ENCODE measurements at regions of chr2 and their contacts with region 1.

Region 1: DNA sequence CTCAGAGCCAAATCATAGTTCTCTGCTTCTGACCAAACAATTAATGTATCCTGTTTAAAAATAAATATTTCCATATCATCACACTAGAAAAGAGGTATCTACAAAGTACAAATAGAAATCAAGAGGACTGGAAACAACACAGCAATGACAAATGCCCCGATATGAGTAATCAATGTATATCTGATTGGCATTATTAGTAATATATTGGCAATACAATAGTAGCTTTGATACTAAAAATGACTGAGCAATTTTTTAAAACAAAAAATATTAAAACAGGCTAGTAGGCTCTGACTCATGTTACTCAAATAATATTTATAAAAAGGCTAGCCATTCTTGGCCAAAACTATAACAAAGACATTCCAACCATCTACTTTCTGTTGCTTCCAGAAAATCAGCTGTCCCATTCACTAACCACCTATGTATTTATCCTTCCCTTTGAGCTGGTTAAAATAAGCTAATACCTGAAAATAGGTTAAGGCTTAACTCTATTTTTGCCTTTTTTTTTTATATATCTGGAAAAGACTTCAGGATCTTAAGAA is 13.3 kb downstream of the PPP4R3B start:
- DNase-seq: no peak
- ATAC-seq: no peak
- H3K4me3 ChIP-seq: no peak overlapping the region
- H3K4me3 Mint-ChIP-seq: no peak overlapping the region
- H3K27ac ChIP-seq: no peak overlapping the region
- H3K27ac Mint-ChIP-seq: peak overlapping the region; percentile 48 to 55
- H3K4me1 ChIP-seq: peaks cover 3 to 20% of the 10 kb centered on the region in 2 experiments
- H3K4me1 Mint-ChIP-seq: peaks cover 70 to 76% (median 75%) of the 10 kb centered on the region in 3 donors
- H3K27me3 ChIP-seq: no peaks in the 10 kb centered on the region
- H3K27me3 Mint-ChIP-seq: no peaks in the 10 kb centered on the region

Region 2: GRCh38 chr2:55239656-55240222 is 364.4 kb before region 1 on chr2:
- CTCF ChIA-PET with region 1: no interaction called
- POLR2A ChIA-PET with region 1: no interaction called
- DNase-seq: no peak
- ATAC-seq: peak in 1 of 4 experiments; percentile 20
- H3K4me3 ChIP-seq: no peak overlapping the region
- H3K4me3 Mint-ChIP-seq: no peak overlapping the region
- H3K27ac ChIP-seq: no peak overlapping the region
- H3K27ac Mint-ChIP-seq: no peak overlapping the region
- H3K4me1 ChIP-seq: peaks cover 0 to under 1% of the 10 kb centered on the region in 2 experiments
- H3K4me1 Mint-ChIP-seq: peaks cover 6 to 23% (median 18%) of the 10 kb centered on the region in 3 donors
- H3K27me3 ChIP-seq: no peaks in the 10 kb centered on the region
- H3K27me3 Mint-ChIP-seq: no peaks in the 10 kb centered on the region

Region 3: DNA sequence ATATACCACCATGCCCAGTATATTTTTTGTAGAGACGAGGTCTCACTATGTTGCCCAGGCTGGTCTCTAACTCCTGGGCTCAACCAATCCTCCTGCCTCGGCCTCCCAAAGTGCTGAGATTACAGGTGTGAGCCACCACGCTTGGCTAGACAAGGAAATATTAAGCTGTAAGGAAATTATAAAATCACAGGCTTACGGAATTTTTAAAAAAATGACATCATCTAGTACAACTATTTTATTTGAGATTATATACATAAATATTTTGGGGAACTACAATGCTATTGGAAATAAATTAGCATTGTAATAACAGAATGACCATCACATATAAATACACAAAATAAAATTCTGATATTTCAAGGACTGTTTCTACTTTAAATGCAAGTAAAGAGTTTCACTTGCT is 28.5 kb before region 1 on chr2:
- CTCF ChIA-PET with region 1: no interaction called
- POLR2A ChIA-PET with region 1: interaction called in 1 of 2 experiments, 11 read pairs
- DNase-seq: no peak
- ATAC-seq: no peak
- H3K4me3 ChIP-seq: no peak overlapping the region
- H3K4me3 Mint-ChIP-seq: no peak overlapping the region
- H3K27ac ChIP-seq: no peak overlapping the region
- H3K27ac Mint-ChIP-seq: no peak overlapping the region
- H3K4me1 ChIP-seq: no peaks in the 10 kb centered on the region
- H3K4me1 Mint-ChIP-seq: peaks cover 0 to 4% (median 2%) of the 10 kb centered on the region in 3 donors
- H3K27me3 ChIP-seq: no peaks in the 10 kb centered on the region
- H3K27me3 Mint-ChIP-seq: no peaks in the 10 kb centered on the region

Region 4: DNA sequence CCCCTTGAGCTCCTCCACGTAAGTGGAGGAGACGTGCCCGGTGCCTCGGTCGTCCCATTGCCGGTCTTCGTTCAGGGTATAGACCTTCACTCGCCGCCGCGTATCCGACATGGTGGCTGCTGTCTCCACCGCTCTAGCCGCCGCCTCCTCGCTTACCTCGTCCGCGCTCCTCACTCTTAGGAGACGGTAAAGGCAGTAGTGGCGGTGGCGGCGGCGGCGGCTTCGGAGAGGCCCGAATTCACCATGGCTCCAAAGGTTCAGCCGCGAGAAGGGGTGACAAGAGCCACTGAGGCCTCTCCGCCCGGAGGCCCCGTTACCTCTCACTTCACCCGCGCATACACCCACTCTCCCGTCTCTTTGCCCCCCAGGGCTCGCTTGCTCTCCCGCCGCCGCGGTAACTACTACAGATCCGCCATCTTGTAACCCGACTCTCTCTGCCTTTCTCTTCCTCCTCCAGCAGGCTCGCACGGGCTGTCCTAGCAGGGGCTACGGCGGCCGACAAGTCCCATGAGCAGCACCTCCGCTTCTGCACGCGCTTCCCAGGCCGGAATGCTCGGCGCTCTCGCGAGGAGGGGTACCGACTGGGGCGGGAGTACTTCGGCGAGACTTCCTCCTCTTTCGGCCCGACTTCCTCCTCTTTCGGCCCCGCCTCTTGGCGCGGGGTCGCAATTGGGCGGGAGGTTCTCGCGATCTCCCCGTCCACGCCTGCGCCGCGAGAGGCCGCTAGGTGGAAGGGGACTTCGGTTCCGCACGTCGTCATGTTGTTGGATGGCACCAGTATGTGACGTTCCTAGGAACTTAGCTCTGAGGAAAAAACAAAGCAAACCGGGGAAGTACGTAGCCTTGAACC is 13.3 kb after region 1 on chr2 and contains the start of gene PPP4R3B:
- CTCF ChIA-PET with region 1: interaction called in 1 of 2 experiments, 3 read pairs
- POLR2A ChIA-PET with region 1: interaction called, 4 to 11 read pairs
- DNase-seq: peak; percentile 97 to 100 (median 99)
- ATAC-seq: peak; percentile 84 to 92 (median 87)
- H3K4me3 ChIP-seq: peak within 1 kb of the TSS; percentile 77 to 100
- H3K4me3 Mint-ChIP-seq: no peak within 1 kb of the TSS
- H3K27ac ChIP-seq: peak within 1 kb of the TSS; percentile 99
- H3K27ac Mint-ChIP-seq: no peak within 1 kb of the TSS
- H3K4me1 ChIP-seq: peaks cover 32 to 38% of the 10 kb centered on the region in 2 experiments
- H3K4me1 Mint-ChIP-seq: peaks cover 28 to 60% (median 30%) of the 10 kb centered on the region in 3 donors
- H3K27me3 ChIP-seq: no peaks in the 10 kb centered on the region
- H3K27me3 Mint-ChIP-seq: no peaks in the 10 kb centered on the region
- total RNA-seq, gene PPP4R3B: 86.4 to 93.0 (median 87.8) TPM